Natural killer cell (primary cell): ENCODE measurements at regions of chr12 and their contacts with region 1.

Region 1: DNA sequence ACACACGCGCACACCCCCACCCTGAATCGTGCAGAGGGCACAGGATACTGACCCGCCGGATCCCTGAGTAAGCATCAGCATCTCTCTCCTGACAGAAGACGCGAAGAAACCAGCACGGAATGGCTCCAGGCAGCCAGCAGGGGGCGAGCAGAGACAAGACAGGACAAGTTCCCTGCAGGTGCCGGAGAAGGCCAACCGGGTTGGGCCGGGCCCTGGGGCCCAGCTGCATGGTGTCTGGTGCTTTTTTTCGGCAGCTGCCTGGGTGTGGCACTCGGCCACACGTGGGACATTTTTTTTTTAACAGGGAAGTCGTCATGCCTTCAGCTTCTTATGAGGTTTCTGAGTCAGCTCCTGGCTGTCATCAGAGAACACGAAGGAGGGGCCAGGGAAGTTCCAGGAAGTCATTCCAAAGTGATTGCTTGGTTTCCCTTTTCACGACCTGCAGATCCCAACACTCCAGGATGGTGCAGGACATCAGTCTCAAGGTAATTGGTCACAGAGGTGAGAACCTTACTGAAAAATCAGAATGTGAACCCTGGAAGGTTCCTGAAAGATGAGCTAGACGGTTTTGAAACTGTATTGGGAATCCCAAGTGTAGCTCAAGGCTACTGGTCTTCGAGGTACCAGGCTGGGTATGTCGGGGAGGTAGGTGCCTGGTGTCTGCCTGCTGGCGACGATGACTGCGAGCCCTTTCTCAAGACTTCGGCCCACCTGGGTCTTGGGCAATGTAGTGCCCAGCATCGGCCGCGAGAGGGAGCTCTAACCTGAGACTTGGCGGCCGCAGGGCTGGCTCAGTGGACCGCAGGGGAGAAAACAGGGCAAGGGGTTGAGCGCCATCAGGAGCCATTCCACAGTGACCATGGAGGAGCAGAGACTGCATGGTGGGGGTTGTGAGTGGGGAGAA is 190.8 kb upstream of the PRMT8 start:
- DNase-seq: peak; percentile 59 to 84
- ATAC-seq: peak; percentile 76 to 83 (median 83)
- H3K4me3 ChIP-seq: no peak overlapping the region
- H3K4me3 Mint-ChIP-seq: peak overlapping the region; percentile 81
- H3K27ac ChIP-seq: no peak overlapping the region
- H3K27ac Mint-ChIP-seq: no peak overlapping the region
- H3K4me1 ChIP-seq: peaks cover 11% of the 10 kb centered on the region
- H3K4me1 Mint-ChIP-seq: peaks cover 12 to 13% of the 10 kb centered on the region in 2 donors
- H3K27me3 ChIP-seq: no peaks in the 10 kb centered on the region
- H3K27me3 Mint-ChIP-seq: peaks cover 0 to 10% of the 10 kb centered on the region in 2 donors
- CTCF ChIP-seq: peak; percentile 90

Region 2: DNA sequence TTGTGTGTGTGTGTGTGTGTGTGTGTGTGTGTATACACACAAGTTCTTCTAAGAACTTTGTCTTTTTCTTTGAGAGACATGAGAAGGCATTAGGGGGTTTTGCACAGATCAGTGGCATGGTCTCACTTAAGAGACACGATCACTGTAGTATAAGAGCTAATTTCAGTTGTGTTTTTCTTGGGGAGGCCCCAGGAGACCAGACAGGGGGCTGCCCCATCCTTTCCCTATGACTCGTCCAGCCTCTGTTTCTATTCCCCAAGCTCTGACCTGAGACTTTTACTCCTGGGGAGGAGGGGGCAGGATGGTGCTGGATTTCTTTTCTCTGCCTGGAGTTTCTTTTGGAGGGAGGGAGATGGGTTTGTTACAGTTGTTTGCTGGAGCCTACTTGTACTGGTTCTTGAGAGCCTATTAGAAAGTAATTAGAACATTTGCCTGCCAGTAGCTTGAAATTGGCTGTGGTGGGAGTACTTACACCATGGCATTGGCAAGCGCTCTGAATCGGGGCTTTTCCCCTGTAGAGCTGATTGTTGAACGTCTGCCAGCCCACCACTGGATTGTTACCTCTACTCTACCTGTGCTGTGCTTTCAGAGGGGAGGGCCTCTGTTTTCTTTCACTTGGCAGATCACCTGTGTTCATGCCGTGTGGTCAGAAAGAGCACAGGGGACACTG is 113.5 kb before region 1 on chr12:
- intact Hi-C with region 1: no loop called
- DNase-seq: no peak
- ATAC-seq: no peak
- H3K4me3 ChIP-seq: no peak overlapping the region
- H3K4me3 Mint-ChIP-seq: no peak overlapping the region
- H3K27ac ChIP-seq: no peak overlapping the region
- H3K27ac Mint-ChIP-seq: no peak overlapping the region
- H3K4me1 ChIP-seq: no peaks in the 10 kb centered on the region
- H3K4me1 Mint-ChIP-seq: no peaks in the 10 kb centered on the region
- H3K27me3 ChIP-seq: no peaks in the 10 kb centered on the region
- H3K27me3 Mint-ChIP-seq: peaks cover 12 to 19% of the 10 kb centered on the region in 2 donors
- CTCF ChIP-seq: no peak

Region 3: DNA sequence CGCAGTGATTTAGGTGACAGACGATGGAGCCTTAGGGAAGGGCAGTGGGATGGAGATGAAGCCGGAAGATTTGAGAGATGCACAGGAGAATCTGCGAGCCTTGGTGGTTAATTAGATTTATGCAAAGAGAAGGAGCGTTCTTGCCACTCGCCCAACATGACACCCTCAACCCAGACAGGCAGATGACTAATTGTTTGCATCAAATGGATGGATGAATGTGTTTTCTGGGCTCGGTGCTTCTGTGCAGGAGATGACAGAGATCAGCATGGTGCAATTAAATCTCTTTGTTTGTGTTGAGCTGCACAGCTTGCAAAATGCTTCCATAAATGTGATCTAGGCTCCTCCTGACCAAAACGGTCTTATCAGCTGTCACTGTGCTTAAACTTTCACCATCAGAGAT is 11.5 kb before region 1 on chr12:
- intact Hi-C with region 1: no loop called
- DNase-seq: no peak
- ATAC-seq: no peak
- H3K4me3 ChIP-seq: no peak overlapping the region
- H3K4me3 Mint-ChIP-seq: no peak overlapping the region
- H3K27ac ChIP-seq: no peak overlapping the region
- H3K27ac Mint-ChIP-seq: no peak overlapping the region
- H3K4me1 ChIP-seq: no peaks in the 10 kb centered on the region
- H3K4me1 Mint-ChIP-seq: no peaks in the 10 kb centered on the region
- H3K27me3 ChIP-seq: no peaks in the 10 kb centered on the region
- H3K27me3 Mint-ChIP-seq: peaks cover 0 to under 1% of the 10 kb centered on the region in 2 donors
- CTCF ChIP-seq: no peak

Region 4: GRCh38 chr12:3777206-3777809 is 477.1 kb after region 1 on chr12:
- intact Hi-C with region 1: loop called (anchors 1 kb)
- DNase-seq: peak in 1 of 2 donors; percentile 68
- ATAC-seq: peak in 2 of 3 donors; percentile 55 to 66
- H3K4me3 ChIP-seq: no peak overlapping the region
- H3K4me3 Mint-ChIP-seq: no peak overlapping the region
- H3K27ac ChIP-seq: no peak overlapping the region
- H3K27ac Mint-ChIP-seq: no peak overlapping the region
- H3K4me1 ChIP-seq: no peaks in the 10 kb centered on the region
- H3K4me1 Mint-ChIP-seq: no peaks in the 10 kb centered on the region
- H3K27me3 ChIP-seq: no peaks in the 10 kb centered on the region
- H3K27me3 Mint-ChIP-seq: peaks cover 0 to 2% of the 10 kb centered on the region in 2 donors
- CTCF ChIP-seq: peak; percentile 70

Region 5: DNA sequence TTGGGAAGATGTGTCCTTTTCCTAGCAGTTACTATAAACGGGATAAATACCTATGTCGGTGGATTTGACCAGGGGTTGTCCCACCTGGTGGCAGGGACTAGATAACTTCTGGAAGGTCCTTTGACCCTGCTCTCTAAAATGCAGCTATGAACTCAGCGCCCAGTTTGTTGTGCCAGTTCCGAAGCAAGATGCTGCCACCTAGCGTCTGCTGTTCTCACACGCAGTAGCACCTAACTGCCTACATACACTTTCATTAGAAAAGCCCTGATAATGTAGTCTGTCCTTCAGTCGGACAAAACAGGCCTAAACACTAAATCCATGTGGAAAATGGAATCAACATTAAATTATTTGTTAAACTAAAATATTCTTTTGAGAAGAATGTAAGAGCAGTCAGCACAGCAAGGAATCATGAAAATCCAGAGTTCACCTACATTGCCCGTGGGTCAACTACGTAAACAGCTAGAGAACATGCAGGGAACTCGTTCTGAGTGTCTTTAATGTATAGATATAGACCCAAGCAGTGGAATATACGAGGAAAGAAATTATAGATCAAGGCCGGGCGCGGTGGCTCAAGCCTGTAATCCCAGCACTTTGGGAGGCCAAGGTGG is 503.8 kb after region 1 on chr12:
- intact Hi-C with region 1: loop called (anchors 1 kb)
- DNase-seq: peak; percentile 39 to 85
- ATAC-seq: peak; percentile 67 to 86 (median 78)
- H3K4me3 ChIP-seq: no peak overlapping the region
- H3K4me3 Mint-ChIP-seq: no peak overlapping the region
- H3K27ac ChIP-seq: no peak overlapping the region
- H3K27ac Mint-ChIP-seq: no peak overlapping the region
- H3K4me1 ChIP-seq: no peaks in the 10 kb centered on the region
- H3K4me1 Mint-ChIP-seq: peaks cover 7 to 11% of the 10 kb centered on the region in 2 donors
- H3K27me3 ChIP-seq: no peaks in the 10 kb centered on the region
- H3K27me3 Mint-ChIP-seq: no peaks in the 10 kb centered on the region
- CTCF ChIP-seq: peak; percentile 80